ENCODE measurements at regions of chr6 and their contacts with region 1.

Region 1: GRCh38 chr6:26031595-26032339 is 55.5 kb upstream of the HFE start:
- DNase-seq: peak; percentile 92
- H3K4me3 Mint-ChIP-seq: peak overlapping the region; percentile 84
- H3K27ac Mint-ChIP-seq: peak overlapping the region; percentile 100
- H3K4me1 Mint-ChIP-seq: peaks cover 74% of the 10 kb centered on the region
- H3K27me3 Mint-ChIP-seq: peaks cover 4% of the 10 kb centered on the region

Region 2: GRCh38 chr6:25815194-25815593 is 216.6 kb before region 1 on chr6:
- CTCF ChIA-PET with region 1: no interaction called
- POLR2A ChIA-PET with region 1: no interaction called
- DNase-seq: no peak
- H3K4me3 Mint-ChIP-seq: no peak overlapping the region
- H3K27ac Mint-ChIP-seq: no peak overlapping the region
- H3K4me1 Mint-ChIP-seq: no peaks in the 10 kb centered on the region
- H3K27me3 Mint-ChIP-seq: peaks cover 11% of the 10 kb centered on the region

Region 3: DNA sequence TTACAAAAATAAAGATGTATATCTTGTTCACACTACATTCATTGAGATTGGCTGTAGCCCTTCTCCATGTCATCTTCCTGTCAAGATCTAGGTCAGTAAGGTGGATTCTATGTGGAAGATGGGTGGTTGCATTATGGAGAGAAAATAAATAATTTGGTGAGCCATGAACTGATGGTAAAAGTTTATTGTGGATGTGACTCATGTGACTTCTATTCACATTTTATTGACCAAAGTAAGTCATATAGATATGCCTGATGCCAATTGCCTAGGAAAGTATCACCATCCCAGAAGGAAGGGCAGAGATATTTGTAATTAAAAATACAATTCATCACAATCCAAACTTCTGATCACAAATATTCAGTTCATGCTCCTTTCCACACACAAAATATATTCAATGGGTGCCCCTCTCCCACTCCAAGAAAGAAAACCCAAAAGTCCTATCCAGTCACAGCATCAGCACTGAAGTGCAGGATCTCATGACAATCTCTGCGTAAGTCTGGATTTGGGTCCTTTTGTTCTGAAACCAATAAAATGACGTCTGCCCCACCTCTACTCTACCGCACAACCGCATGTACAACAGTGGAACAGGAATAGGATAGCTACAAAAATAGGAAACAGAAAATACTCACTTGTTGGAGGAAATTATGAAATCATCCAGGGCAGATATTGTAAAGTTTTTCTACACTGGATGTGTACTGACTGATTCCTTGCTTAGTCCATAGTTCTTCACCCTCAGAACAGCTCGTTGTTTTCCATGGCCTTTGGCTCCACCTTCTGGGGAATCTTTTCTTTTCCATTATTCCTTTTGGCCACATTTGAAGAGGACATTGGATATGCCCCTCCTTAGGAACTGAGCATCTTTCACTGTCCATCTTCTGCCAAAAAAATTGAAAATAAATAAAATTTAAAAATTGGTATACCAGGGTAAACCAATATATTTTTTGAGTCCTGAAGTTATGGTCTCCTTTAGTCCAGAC is 141.6 kb before region 1 on chr6:
- CTCF ChIA-PET with region 1: no interaction called
- POLR2A ChIA-PET with region 1: no interaction called
- DNase-seq: no peak
- H3K4me3 Mint-ChIP-seq: no peak overlapping the region
- H3K27ac Mint-ChIP-seq: no peak overlapping the region
- H3K4me1 Mint-ChIP-seq: peaks cover 2% of the 10 kb centered on the region
- H3K27me3 Mint-ChIP-seq: no peaks in the 10 kb centered on the region

Region 4: DNA sequence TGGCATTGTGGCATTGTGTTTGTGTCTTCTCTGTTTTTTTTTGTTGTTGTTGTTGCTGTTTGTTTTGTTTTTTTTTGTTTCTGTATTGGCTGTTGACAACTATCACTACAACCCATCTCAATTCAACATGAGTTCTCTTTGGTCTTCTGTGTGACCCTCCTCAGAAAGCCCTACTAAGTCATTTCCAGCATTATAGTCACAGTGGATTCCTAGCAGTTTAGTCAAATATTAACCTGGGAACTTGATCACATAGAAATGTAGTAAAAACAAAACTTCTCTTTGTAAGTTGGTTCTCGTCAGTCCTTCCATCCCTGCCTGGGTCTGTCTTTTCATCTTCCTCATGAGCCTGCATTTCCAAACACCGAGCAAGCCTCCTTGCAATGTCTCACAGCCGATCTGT is 118.0 kb before region 1 on chr6:
- CTCF ChIA-PET with region 1: no interaction called
- POLR2A ChIA-PET with region 1: no interaction called
- DNase-seq: no peak
- H3K4me3 Mint-ChIP-seq: no peak overlapping the region
- H3K27ac Mint-ChIP-seq: no peak overlapping the region
- H3K4me1 Mint-ChIP-seq: peaks cover 6% of the 10 kb centered on the region
- H3K27me3 Mint-ChIP-seq: no peaks in the 10 kb centered on the region

Region 5: DNA sequence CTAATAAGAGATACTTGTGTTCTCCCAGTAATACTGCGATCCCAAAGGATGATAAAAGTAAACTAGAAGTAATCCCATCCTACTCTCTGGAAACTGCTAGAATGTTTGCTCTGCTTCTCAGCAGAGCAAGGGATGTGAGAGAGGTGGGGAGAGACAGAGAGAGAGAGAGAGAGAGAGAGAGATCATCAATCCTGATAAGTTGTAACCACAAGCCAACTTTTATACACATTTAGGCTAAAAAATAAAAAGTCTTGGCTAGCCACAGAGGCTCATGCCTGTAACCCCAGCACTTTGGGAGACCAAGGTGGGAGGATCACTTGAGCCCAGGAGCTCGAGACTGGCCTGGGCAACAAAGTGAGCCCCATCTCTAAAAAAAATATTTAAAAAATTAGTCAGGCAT is 85.1 kb before region 1 on chr6:
- CTCF ChIA-PET with region 1: no interaction called
- POLR2A ChIA-PET with region 1: no interaction called
- DNase-seq: no peak
- H3K4me3 Mint-ChIP-seq: no peak overlapping the region
- H3K27ac Mint-ChIP-seq: peak overlapping the region; percentile 12
- H3K4me1 Mint-ChIP-seq: peaks cover 27% of the 10 kb centered on the region
- H3K27me3 Mint-ChIP-seq: no peaks in the 10 kb centered on the region

Region 6: GRCh38 chr6:25962149-25963127 is 69.3 kb before region 1 on chr6 and contains the start of gene TRIM38:
- CTCF ChIA-PET with region 1: interaction called, 6 read pairs
- POLR2A ChIA-PET with region 1: interaction called, 21 read pairs
- DNase-seq: peak; percentile 84
- H3K4me3 Mint-ChIP-seq: peak within 1 kb of the TSS; percentile 96
- H3K27ac Mint-ChIP-seq: peak within 1 kb of the TSS; percentile 96
- H3K4me1 Mint-ChIP-seq: peaks cover 80% of the 10 kb centered on the region
- H3K27me3 Mint-ChIP-seq: no peaks in the 10 kb centered on the region
- total RNA-seq, gene TRIM38: 32.6 to 33.5 TPM

Region 7: DNA sequence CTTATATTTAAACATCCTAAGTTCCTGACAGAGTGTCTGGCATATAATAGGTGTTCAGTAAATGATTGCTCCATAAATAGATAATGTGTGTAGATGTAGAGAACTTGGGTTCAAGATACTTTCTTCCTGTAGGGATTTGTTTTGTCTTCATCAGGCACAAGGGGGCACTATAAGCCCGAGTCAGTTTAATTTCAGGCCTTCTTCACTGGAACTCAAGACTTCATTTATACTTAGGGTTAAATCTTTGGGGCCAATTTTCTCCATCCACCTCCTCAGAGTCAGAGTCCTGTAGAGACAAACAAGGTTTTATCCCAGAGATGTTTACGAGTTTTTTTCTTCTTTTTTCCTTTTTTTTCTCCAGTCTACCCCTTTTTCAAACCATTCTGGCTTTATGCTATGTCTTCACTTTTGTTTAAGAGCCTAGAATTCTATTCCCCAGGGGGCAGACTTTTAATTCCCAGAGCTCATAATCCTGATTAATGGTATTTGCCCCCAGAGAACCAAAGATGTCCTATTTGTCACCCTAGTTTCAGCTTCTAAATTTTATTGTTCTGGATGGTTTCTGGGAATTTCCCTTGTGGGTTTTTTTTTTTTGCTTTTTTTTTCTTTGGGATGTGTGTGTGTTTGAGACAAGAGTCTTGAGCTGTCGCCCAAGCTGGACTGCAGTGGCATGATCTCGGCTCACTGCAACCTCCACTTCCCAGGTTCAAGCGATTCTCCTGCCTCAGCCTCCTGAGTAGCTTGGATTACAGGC is 143.8 kb after region 1 on chr6:
- CTCF ChIA-PET with region 1: no interaction called
- POLR2A ChIA-PET with region 1: interaction called, 13 read pairs
- DNase-seq: peak; percentile 68
- H3K4me3 Mint-ChIP-seq: peak overlapping the region; percentile 5
- H3K27ac Mint-ChIP-seq: peak overlapping the region; percentile 50
- H3K4me1 Mint-ChIP-seq: peaks cover 44% of the 10 kb centered on the region
- H3K27me3 Mint-ChIP-seq: no peaks in the 10 kb centered on the region

Region 8: GRCh38 chr6:26204332-26205165 is 172.8 kb after region 1 on chr6:
- CTCF ChIA-PET with region 1: no interaction called
- POLR2A ChIA-PET with region 1: interaction called, 295 read pairs
- DNase-seq: peak; percentile 90
- H3K4me3 Mint-ChIP-seq: no peak overlapping the region
- H3K27ac Mint-ChIP-seq: no peak overlapping the region
- H3K4me1 Mint-ChIP-seq: peaks cover 35% of the 10 kb centered on the region
- H3K27me3 Mint-ChIP-seq: no peaks in the 10 kb centered on the region

Region 9: DNA sequence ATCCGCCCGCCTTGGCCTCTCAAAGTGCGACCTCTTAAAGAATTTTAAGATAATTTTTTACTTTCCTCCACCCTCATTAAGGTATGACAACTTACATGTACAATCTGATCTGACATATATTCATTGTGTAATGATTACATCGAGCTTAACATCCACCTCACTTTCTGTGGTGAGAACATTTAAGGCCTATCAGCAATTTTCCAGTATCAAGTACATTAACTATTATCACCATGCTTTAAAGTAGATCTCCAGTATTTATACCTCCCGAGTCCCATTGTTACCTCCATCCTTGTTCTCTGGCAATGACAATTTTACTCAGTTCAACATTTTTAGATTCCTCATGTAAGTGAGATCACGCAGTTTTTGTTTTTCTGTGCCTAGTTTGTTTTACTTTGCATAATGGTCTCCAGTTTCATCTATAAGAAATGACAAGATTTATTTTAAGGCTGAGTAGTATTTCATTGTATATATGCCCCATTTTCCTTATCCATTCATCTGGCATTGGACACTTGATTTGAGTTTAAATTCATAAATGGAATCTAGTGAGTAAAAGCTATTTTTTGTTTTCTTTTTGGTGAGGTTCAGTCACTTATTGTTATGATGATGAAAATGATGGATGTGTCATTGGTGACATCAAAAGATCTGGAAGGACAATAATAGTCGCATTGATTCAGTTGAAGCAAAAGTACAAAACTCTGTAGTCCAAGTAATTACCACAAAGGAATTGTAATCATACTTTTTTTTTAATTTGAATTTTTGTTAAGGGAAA is 1793.4 kb after region 1 on chr6:
- CTCF ChIA-PET with region 1: interaction called, 4 read pairs
- POLR2A ChIA-PET with region 1: interaction called, 14 read pairs
- DNase-seq: no peak
- H3K4me3 Mint-ChIP-seq: peak overlapping the region; percentile 82
- H3K27ac Mint-ChIP-seq: peak overlapping the region; percentile 99
- H3K4me1 Mint-ChIP-seq: peaks cover 51% of the 10 kb centered on the region
- H3K27me3 Mint-ChIP-seq: no peaks in the 10 kb centered on the region

Measured in activated CD4-positive, alpha-beta memory T cell treated with anti-CD3 and anti-CD28 coated beads, Interleukin-2, amount 10 ng/mL, durations not matched to agents 7 days and 5 days (primary cell).